Panc1 (cell line): ENCODE measurements at regions of chr2 and their contacts with region 1.

Region 1: DNA sequence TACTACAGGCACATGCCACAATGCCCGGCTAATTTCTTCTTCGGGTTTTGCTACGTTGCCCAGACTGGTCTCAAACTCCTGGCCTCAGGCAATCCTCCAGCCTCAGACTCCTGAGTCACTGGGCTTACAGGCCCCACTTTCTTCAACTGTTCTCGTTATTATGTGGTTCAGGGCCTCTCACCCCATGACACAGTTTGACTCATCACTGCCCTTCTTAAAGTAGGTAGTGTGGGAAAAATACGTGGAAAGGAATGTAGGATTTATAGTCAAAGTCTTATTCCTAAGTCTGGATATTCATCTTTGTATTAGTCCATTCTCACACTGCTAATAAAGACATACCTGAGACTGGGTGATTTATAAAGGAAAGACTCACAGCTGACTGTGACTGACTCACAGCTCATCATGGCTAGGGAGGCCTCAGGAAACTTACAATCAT is 19.4 kb downstream of the CENPA start:
- DNase-seq: no peak
- ATAC-seq: peak; percentile 69
- H3K4me3 ChIP-seq: no peak overlapping the region
- H3K27ac ChIP-seq: no peak overlapping the region
- H3K4me1 ChIP-seq: no peaks in the 10 kb centered on the region
- H3K27me3 ChIP-seq: no peaks in the 10 kb centered on the region
- CTCF ChIP-seq: no peak

Region 2: DNA sequence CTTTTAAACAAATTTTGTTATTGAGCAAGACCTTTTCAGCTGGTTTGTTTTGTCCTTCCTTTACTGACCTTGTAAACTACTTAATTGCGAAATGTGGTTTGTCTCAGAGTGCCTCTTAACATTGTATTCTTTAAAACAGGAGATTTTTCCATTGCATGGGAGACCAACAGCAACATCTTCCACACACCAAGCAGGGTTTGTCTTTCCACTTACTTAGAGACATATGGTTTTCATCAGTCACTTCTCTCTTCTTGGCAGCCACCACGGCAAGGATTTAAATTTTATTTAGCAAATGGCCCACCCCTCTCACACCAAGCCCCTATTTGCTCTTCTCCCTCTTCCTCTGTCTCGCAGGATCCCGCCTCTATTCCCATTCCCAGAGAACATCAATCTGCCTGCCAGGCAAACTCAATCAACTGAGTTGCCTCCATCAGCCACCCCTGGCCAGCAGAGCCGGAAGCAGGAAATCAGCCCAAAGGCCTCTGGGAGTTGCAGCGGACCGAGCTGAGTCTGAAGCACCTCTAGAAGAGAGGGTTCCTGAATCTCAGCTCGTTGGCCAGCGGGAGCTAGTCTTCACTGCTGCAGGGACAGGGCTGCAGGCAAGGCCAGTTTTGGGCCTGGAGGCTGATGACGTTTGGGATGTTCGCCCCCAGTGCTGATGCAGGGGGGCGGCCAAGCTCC is 152.8 kb before region 1 on chr2:
- CTCF ChIA-PET with region 1: no interaction called
- POLR2A ChIA-PET with region 1: no interaction called
- in situ Hi-C with region 1: no loop called
- intact Hi-C with region 1: no loop called
- DNase-seq: no peak
- ATAC-seq: no peak
- H3K4me3 ChIP-seq: no peak overlapping the region
- H3K27ac ChIP-seq: no peak overlapping the region
- H3K4me1 ChIP-seq: no peaks in the 10 kb centered on the region
- H3K27me3 ChIP-seq: no peaks in the 10 kb centered on the region
- CTCF ChIP-seq: no peak

Region 3: GRCh38 chr2:26785431-26786206 is 19.6 kb before region 1 on chr2 and contains the start of gene CENPA:
- CTCF ChIA-PET with region 1: no interaction called
- POLR2A ChIA-PET with region 1: interaction called, 10 read pairs
- in situ Hi-C with region 1: no loop called
- intact Hi-C with region 1: no loop called
- DNase-seq: peak; percentile 99
- ATAC-seq: peak; percentile 98
- H3K4me3 ChIP-seq: peak within 1 kb of the TSS; percentile 69 to 76
- H3K27ac ChIP-seq: peak within 1 kb of the TSS; percentile 96
- H3K4me1 ChIP-seq: peaks cover 9% of the 10 kb centered on the region
- H3K27me3 ChIP-seq: no peaks in the 10 kb centered on the region
- CTCF ChIP-seq: no peak
- total RNA-seq, gene CENPA: 55.0 TPM

Region 4: DNA sequence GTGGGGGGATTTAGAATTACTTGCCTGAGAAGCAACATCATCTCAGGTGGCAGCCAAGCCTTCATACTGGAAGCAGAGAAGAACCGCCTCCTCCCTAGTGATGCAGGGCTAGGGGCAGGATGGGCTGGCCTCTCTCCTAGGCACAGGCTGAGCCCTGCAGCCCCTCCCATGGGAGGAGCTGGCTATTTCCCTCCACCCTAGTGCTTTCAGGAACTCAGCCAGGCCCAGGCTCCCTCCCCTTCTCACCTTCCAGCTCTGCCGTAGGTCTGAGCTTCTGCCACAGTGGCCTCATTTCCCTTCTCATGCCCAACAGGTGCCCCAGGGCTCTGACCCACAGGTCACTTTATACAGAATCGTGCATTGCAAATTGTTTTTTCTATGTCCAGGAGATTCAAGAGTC is 11.6 kb after region 1 on chr2:
- CTCF ChIA-PET with region 1: no interaction called
- POLR2A ChIA-PET with region 1: no interaction called
- in situ Hi-C with region 1: no loop called
- intact Hi-C with region 1: no loop called
- DNase-seq: no peak
- ATAC-seq: peak; percentile 47; the same call in 1 of the 2 replicates
- H3K4me3 ChIP-seq: no peak overlapping the region
- H3K27ac ChIP-seq: no peak overlapping the region
- H3K4me1 ChIP-seq: no peaks in the 10 kb centered on the region
- H3K27me3 ChIP-seq: no peaks in the 10 kb centered on the region
- CTCF ChIP-seq: no peak

Region 5: GRCh38 chr2:26885651-26886329 is 80.5 kb after region 1 on chr2:
- CTCF ChIA-PET with region 1: no interaction called
- POLR2A ChIA-PET with region 1: interaction called, 10 read pairs
- in situ Hi-C with region 1: no loop called
- intact Hi-C with region 1: no loop called
- DNase-seq: no peak
- ATAC-seq: no peak
- H3K4me3 ChIP-seq: no peak overlapping the region
- H3K27ac ChIP-seq: no peak overlapping the region
- H3K4me1 ChIP-seq: no peaks in the 10 kb centered on the region
- H3K27me3 ChIP-seq: peaks cover 8% of the 10 kb centered on the region
- CTCF ChIP-seq: no peak